Naive thymus-derived CD4-positive, alpha-beta T cell (primary cell): ENCODE measurements at regions of chr7 and their contacts with region 1.

Region 1: DNA sequence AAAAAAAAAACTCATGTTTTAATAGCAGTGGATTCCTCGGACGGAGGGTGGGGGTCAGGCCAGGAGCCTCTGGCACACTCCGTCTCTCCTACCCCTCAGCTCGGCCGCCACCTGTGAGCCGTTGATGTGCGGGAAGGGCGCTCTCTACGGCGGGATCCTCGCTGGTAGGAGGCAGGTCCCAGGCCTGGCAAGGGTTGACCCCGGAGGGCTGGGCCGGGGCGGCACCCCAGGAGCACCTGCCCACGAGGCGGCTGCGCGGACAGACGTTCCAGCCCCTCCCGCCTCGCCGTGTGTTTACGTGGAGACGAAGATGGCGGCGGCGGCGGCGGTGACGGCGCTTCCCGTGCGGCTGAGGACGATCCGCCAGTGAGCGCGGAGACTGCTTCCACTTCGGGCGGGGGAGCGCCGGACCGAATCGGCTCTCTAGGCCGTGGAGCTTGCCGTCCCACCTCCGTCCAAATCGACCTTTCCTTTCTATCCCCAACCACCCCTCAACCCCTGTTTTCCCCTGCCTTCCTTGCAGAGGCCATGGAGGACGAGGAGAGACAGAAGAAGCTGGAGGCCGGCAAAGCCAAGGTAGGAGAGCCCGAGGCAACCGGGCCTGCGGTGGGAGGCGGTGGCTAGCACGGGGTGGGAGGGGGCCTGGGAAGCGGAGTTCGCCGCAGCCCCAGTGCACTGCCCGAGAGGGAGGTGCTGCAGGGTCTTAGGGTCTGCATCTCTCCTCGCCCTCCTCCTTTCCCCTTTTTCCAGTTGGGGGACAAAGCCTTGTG is at the start of gene AKAP9:
- DNase-seq: peak; percentile 79 to 89 (median 88)
- ATAC-seq: peak; percentile 93
- H3K4me3 ChIP-seq: peak within 1 kb of the TSS; percentile 97
- H3K4me3 Mint-ChIP-seq: peak within 1 kb of the TSS; percentile 85 to 98 (median 92)
- H3K27ac ChIP-seq: peak within 1 kb of the TSS; percentile 93
- H3K27ac Mint-ChIP-seq: peak within 1 kb of the TSS; percentile 90 to 98 (median 95)
- H3K4me1 ChIP-seq: peaks cover 15 to 16% of the 10 kb centered on the region in 2 donors
- H3K4me1 Mint-ChIP-seq: peaks cover 28 to 54% (median 44%) of the 10 kb centered on the region in 7 donors
- H3K27me3 ChIP-seq: no peaks in the 10 kb centered on the region
- H3K27me3 Mint-ChIP-seq: peaks cover 0 to 2% (median 0%) of the 10 kb centered on the region in 5 donors
- total RNA-seq, gene AKAP9: 50.0 to 93.5 (median 66.1) TPM

Region 2: DNA sequence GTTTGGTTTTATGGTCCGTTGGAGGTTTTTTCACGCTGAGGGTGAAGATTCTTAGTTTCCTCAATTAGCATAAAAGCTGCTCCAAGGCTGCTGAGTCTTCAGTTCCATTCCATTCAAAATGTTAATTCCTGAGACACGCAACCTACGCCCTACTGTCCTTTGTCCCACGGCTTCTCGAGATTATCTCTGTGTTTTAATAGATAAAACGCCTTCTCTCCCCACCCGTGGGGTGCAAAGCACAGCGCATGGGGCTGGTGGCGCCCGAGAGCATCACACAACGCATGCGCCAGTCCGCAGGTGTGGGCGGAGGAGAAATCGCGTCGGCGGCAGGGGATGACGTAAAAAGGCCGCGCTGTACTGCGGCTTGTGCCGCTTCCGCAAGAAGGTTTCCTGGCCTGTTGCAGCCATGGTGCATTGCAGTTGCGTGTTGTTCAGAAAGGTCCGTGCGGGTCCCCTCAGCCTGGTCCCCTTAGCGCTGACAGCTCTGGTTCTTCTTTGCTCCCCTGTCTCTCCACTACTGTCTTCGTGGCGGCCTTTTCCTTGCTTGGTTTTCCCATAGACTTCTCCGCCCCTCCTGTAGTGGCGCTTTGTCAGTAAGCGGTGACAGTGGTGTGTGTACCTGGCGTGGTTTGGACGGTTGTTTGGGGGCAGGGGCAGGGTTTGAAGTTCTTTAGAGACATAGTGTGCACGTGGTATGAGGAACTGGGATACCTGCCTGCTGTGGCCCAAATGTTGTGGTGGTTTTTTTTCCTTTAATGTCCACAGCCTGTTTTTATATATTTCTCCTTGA is 1594.2 kb before region 1 on chr7 and contains the start of gene GTPBP10:
- CTCF ChIA-PET with region 1: no interaction called
- POLR2A ChIA-PET with region 1: interaction called, 5 read pairs
- intact Hi-C with region 1: loop called (anchors 5 kb)
- DNase-seq: peak; percentile 88 to 96 (median 94)
- ATAC-seq: peak; percentile 99
- H3K4me3 ChIP-seq: peak within 1 kb of the TSS; percentile 83
- H3K4me3 Mint-ChIP-seq: peak within 1 kb of the TSS; percentile 93 to 99 (median 98)
- H3K27ac ChIP-seq: peak within 1 kb of the TSS; percentile 95
- H3K27ac Mint-ChIP-seq: peak within 1 kb of the TSS; percentile 96 to 100 (median 99)
- H3K4me1 ChIP-seq: peaks cover 13 to 26% of the 10 kb centered on the region in 2 donors
- H3K4me1 Mint-ChIP-seq: peaks cover 23 to 65% (median 53%) of the 10 kb centered on the region in 7 donors
- H3K27me3 ChIP-seq: no peaks in the 10 kb centered on the region
- H3K27me3 Mint-ChIP-seq: peaks cover 0 to 2% (median 0%) of the 10 kb centered on the region in 5 donors
- total RNA-seq, gene GTPBP10: 21.5 to 51.4 (median 29.8) TPM

Region 3: DNA sequence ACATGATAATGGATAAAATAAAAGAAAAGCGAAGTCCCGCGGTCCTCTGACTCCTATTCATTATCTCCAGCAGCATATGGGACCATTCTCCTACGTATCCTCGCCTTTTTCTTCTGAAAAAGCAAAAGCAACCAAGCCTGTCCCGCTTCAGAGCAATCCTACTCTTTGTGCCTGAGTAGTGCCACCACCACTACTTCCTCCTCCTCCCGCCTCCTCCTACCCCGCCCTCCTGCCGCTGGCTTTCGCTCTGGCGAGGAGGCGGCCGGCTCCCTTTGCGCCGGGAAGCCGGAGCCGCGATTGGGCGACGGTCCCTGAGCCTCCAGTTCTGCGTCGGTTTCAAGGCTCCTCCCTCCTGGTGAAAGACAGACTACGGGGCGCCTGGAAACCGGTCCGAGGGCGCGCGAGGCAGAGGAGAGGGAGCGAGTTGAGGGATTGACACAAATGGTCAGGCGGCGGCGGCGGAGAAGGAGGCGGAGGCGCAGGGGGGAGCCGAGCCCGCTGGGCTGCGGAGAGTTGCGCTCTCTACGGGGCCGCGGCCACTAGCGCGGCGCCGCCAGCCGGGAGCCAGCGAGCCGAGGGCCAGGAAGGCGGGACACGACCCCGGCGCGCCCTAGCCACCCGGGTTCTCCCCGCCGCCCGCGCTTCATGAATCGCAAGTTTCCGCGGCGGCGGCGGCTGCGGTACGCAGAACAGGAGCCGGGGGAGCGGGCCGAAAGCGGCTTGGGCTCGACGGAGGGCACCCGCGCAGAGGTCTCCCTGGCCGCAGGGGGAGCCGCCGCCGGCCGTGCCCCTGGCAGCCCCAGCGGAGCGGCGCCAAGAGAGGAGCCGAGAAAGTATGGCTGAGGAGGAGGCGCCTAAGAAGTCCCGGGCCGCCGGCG is 676.5 kb before region 1 on chr7 and contains the start of gene FZD1:
- CTCF ChIA-PET with region 1: no interaction called
- POLR2A ChIA-PET with region 1: no interaction called
- intact Hi-C with region 1: loop called in 1 of 2 experiments (anchors 5 kb)
- DNase-seq: peak in 8 of 9 donors; percentile 7 to 77 (median 44)
- ATAC-seq: peak; percentile 89
- H3K4me3 ChIP-seq: peak within 1 kb of the TSS; percentile 47
- H3K4me3 Mint-ChIP-seq: peak within 1 kb of the TSS; percentile 87 to 96 (median 92)
- H3K27ac ChIP-seq: no peak within 1 kb of the TSS
- H3K27ac Mint-ChIP-seq: peak within 1 kb of the TSS in 3 of 9 donors; percentile 42 to 75 (median 63)
- H3K4me1 ChIP-seq: peaks cover 0 to 9% of the 10 kb centered on the region in 2 donors
- H3K4me1 Mint-ChIP-seq: peaks cover 0 to 26% (median 12%) of the 10 kb centered on the region in 7 donors
- H3K27me3 ChIP-seq: no peaks in the 10 kb centered on the region
- H3K27me3 Mint-ChIP-seq: peaks cover 16 to 60% (median 41%) of the 10 kb centered on the region in 5 donors
- total RNA-seq, gene FZD1: 0.24 to 3.4 (median 0.64) TPM

Region 4: GRCh38 chr7:92075434-92076158 is 134.8 kb after region 1 on chr7:
- CTCF ChIA-PET with region 1: no interaction called
- POLR2A ChIA-PET with region 1: no interaction called
- intact Hi-C with region 1: no loop called
- DNase-seq: no peak
- ATAC-seq: no peak
- H3K4me3 ChIP-seq: no peak overlapping the region
- H3K4me3 Mint-ChIP-seq: no peak overlapping the region
- H3K27ac ChIP-seq: no peak overlapping the region
- H3K27ac Mint-ChIP-seq: no peak overlapping the region
- H3K4me1 ChIP-seq: no peaks in the 10 kb centered on the region
- H3K4me1 Mint-ChIP-seq: peaks cover 0 to 9% (median 0%) of the 10 kb centered on the region in 7 donors
- H3K27me3 ChIP-seq: no peaks in the 10 kb centered on the region
- H3K27me3 Mint-ChIP-seq: no peaks in the 10 kb centered on the region

Region 5: DNA sequence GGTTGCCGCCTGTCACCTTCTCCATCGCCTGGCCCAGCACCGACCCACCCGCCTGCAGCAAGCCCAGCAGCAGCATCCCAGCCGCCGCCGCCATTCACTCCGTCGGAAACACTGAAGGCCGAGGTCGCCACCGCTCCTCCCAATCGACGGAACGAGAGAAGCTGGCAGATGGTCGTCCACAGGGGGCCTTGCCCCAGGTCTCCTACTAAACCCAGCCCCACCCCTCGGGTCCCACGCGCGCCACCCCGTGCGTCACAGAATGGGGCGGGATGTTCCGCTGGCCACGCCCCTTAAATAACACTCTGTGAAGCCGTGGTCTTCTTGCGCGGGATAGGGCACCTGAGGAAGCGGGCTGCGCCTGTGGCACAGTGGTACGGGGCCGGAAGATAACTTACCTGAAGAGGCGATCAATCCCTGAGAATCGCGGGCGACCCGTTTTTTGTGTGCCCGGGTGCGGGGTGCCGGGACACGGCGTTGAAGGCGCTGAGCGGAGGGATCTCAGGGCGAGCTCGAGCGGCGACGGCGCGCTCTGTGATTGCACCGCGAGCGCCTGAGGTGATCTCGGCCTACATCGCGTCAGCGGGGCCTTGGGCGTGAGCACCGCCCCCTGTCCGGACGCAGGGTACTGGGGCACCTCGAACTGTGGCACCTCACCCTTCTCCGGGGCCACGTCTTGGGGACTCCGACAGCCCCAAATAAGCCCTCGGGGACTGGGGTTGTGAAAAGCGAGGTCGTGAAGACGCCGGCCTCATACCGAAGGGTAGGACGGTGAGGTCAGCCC is 193.7 kb after region 1 on chr7 and contains the start of gene CYP51A1:
- CTCF ChIA-PET with region 1: no interaction called
- POLR2A ChIA-PET with region 1: interaction called, 9 read pairs
- intact Hi-C with region 1: loop called (anchors 1 kb)
- DNase-seq: peak; percentile 93 to 98 (median 96)
- ATAC-seq: peak; percentile 93
- H3K4me3 ChIP-seq: peak within 1 kb of the TSS; percentile 92
- H3K4me3 Mint-ChIP-seq: peak within 1 kb of the TSS; percentile 95 to 100 (median 98)
- H3K27ac ChIP-seq: peak within 1 kb of the TSS; percentile 94
- H3K27ac Mint-ChIP-seq: peak within 1 kb of the TSS; percentile 89 to 100 (median 99)
- H3K4me1 ChIP-seq: peaks cover 4 to 12% of the 10 kb centered on the region in 2 donors
- H3K4me1 Mint-ChIP-seq: peaks cover 12 to 49% (median 40%) of the 10 kb centered on the region in 7 donors
- H3K27me3 ChIP-seq: no peaks in the 10 kb centered on the region
- H3K27me3 Mint-ChIP-seq: peaks cover 0 to 2% (median 0%) of the 10 kb centered on the region in 5 donors
- total RNA-seq, gene CYP51A1: 14.7 to 36.6 (median 21.7) TPM

Region 6: GRCh38 chr7:92590711-92591310 is 650.1 kb after region 1 on chr7:
- CTCF ChIA-PET with region 1: no interaction called
- POLR2A ChIA-PET with region 1: no interaction called
- intact Hi-C with region 1: loop called in 1 of 2 experiments (anchors 2 kb)
- DNase-seq: peak in 1 of 9 donors; percentile 11
- ATAC-seq: no peak
- H3K4me3 ChIP-seq: peak overlapping the region; percentile 77
- H3K4me3 Mint-ChIP-seq: peak overlapping the region; percentile 90 to 96 (median 94)
- H3K27ac ChIP-seq: peak overlapping the region; percentile 94
- H3K27ac Mint-ChIP-seq: peak overlapping the region in 8 of 9 donors; percentile 22 to 96 (median 76)
- H3K4me1 ChIP-seq: peaks cover 14 to 21% of the 10 kb centered on the region in 2 donors
- H3K4me1 Mint-ChIP-seq: peaks cover 27 to 46% (median 39%) of the 10 kb centered on the region in 7 donors
- H3K27me3 ChIP-seq: no peaks in the 10 kb centered on the region
- H3K27me3 Mint-ChIP-seq: peaks cover 0 to 4% (median 0%) of the 10 kb centered on the region in 5 donors

Region 7: DNA sequence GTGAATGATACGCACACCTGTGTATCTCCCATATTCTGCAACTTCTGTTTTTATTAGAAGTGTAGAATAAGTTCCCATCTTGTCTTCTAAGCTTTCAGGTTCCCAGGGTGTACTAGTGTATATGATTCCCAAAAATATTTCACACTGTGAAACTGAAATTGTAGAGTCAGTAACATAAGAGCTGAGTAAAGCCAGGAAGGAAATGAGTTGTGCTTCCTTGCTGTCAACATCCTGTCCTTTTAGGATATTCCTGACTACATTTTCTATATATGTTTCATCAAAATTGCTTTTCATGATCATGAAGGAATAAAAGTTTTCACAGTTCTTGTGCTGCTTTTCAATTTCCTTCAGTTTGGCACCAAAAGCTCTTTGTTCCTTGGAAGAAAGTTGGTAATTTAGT is 1192.2 kb after region 1 on chr7:
- CTCF ChIA-PET with region 1: no interaction called
- POLR2A ChIA-PET with region 1: no interaction called
- intact Hi-C with region 1: no loop called
- DNase-seq: no peak
- ATAC-seq: no peak
- H3K4me3 ChIP-seq: no peak overlapping the region
- H3K4me3 Mint-ChIP-seq: no peak overlapping the region
- H3K27ac ChIP-seq: no peak overlapping the region
- H3K27ac Mint-ChIP-seq: no peak overlapping the region
- H3K4me1 ChIP-seq: no peaks in the 10 kb centered on the region
- H3K4me1 Mint-ChIP-seq: no peaks in the 10 kb centered on the region
- H3K27me3 ChIP-seq: no peaks in the 10 kb centered on the region
- H3K27me3 Mint-ChIP-seq: no peaks in the 10 kb centered on the region